Common myeloid progenitor, CD34-positive (primary cell): ENCODE measurements at regions of chr19 and their contacts with region 1.

Region 1: GRCh38 chr19:44770550-44771257 is 7.0 kb upstream of the CBLC start:
- DNase-seq: peak; percentile 98 to 99 (median 99)
- H3K4me3 ChIP-seq: peak overlapping the region in 2 of 7 experiments; percentile 19 to 28
- H3K27ac ChIP-seq: no peak overlapping the region
- H3K4me1 ChIP-seq: peaks cover 3 to 29% (median 18%) of the 10 kb centered on the region in 4 experiments
- H3K27me3 ChIP-seq: no peaks in the 10 kb centered on the region

Region 2: DNA sequence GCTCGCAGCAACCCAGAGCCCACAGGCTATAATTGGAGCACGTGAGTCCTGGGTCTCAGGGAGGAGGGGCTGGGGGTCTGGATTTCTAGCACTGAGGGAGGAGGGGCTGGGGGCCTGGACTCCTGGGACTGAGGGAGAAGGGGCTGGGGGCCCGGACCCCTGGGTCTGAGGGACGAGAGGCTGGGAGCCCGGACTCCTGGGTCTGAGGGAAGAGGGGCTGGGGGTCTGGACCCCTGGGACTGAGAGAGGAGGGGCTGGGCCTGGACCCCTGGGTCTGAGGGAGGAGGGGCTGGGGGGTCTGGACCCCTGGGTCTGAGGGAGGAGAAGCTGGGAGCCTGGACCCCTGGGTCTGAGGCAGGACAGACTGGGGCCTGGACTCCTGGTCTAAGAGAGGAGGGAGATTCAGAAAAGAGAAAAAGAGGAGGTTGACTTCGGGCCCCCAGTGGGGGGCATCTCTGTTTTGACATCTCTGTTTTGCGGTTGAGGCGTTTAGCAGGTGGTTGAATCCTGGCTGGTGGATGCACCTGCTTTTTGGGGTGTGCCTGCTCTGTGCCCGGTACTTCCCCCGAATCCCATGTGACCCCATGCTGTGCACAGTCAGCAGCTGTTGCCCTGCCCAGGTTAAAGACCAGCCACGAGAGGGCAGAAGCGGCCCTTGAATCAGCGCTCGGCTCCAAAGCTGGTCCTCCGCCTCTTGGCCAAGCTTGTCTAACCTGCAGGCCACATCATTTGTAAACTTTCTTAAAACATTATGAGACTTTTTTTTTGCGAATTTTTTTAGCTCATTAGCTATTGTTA is 116.5 kb before region 1 on chr19:
- CTCF ChIA-PET with region 1: interaction called, 14 read pairs
- POLR2A ChIA-PET with region 1: no interaction called
- DNase-seq: peak; percentile 84 to 94 (median 94)
- H3K4me3 ChIP-seq: no peak overlapping the region
- H3K27ac ChIP-seq: no peak overlapping the region
- H3K4me1 ChIP-seq: peaks cover 0 to 5% (median 2%) of the 10 kb centered on the region in 4 experiments
- H3K27me3 ChIP-seq: no peaks in the 10 kb centered on the region

Region 3: DNA sequence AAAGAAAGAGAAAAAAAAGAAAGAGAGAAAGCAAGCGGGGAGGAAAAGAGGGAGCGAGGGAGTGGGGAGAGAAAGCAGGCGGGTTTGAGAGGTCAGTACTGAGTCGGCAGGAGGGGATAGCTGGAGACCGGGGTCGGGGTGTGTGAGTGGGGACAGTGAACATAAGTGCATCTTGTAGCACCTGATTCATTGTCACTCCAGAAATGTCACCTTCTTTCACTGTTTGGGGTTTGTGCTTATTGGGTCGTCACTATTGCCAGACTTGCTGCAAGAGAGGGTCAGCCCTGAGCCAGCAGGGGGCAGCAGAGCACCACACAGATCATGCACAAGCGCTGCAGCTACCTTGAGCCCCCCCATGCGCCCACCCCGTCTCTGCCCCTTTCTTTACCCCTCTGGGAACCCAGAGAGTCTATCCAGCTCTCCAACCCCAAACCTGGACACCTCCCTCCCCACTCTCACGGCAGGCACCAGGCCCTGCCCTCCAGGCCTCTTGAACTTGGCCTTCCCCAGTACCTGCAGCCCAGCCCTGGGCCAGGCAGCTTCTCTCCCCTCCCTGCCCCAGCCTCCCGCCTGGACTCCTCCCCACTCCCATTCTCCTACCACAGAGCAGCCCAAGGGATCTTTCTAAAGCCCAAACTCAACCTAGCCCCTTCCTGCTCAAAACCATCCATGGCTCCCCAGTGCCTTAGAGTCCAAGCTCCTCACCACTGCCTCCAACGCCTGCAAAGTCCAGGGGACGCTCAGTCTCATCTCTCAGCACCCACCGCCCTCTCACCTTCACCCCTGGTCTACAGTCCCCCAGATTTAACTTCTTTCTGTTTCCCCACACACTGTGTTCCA is 81.4 kb before region 1 on chr19:
- CTCF ChIA-PET with region 1: interaction called, 138 read pairs
- POLR2A ChIA-PET with region 1: interaction called, 3 read pairs
- DNase-seq: peak; percentile 82 to 92 (median 88)
- H3K4me3 ChIP-seq: peak overlapping the region in 1 of 7 experiments; percentile 24
- H3K27ac ChIP-seq: no peak overlapping the region
- H3K4me1 ChIP-seq: peaks cover 7 to 46% (median 40%) of the 10 kb centered on the region in 4 experiments
- H3K27me3 ChIP-seq: peaks cover 0 to 6% (median 0%) of the 10 kb centered on the region in 5 experiments

Region 4: DNA sequence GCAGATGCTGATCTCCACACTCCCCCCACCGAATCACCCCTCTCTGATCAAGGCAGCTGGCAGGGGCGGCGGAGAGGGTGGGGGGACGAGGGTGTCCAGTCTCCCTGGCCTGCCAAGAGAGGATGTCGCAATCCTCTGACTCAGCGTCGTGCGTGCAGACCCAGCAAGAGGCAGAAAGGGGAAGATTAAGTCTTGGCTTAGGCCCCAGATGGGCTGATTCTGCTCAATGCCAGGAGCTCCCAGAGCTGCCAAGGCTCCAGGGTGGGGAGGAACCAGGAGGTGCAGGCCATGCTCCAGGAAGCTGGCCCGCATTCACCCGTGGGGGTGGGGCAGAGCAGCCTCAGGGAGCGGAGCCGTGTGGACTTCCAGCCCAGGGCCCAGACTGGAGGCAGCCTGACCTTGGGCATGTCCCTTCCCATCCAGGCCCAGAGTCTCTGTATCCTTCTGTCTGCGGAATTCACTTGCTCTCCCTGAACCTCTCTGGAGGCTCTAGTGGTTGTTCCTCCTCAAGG is 28.8 kb before region 1 on chr19:
- CTCF ChIA-PET with region 1: interaction called, 17 read pairs
- POLR2A ChIA-PET with region 1: no interaction called
- DNase-seq: peak; percentile 95 to 98 (median 98)
- H3K4me3 ChIP-seq: peak overlapping the region in 1 of 7 experiments; percentile 48
- H3K27ac ChIP-seq: peak overlapping the region; percentile 33 to 79
- H3K4me1 ChIP-seq: peaks cover 17 to 84% (median 52%) of the 10 kb centered on the region in 4 experiments
- H3K27me3 ChIP-seq: no peaks in the 10 kb centered on the region

Region 5: GRCh38 chr19:44752816-44753618 is 17.7 kb before region 1 on chr19:
- CTCF ChIA-PET with region 1: interaction called, 26 read pairs
- POLR2A ChIA-PET with region 1: interaction called, 36 read pairs
- DNase-seq: peak; percentile 98 to 100 (median 100)
- H3K4me3 ChIP-seq: peak overlapping the region in 6 of 7 experiments; percentile 25 to 92 (median 59)
- H3K27ac ChIP-seq: peak overlapping the region; percentile 36 to 88
- H3K4me1 ChIP-seq: peaks cover 22 to 82% (median 78%) of the 10 kb centered on the region in 4 experiments
- H3K27me3 ChIP-seq: no peaks in the 10 kb centered on the region

Region 6: GRCh38 chr19:44782729-44783128 is 12.0 kb after region 1 on chr19:
- CTCF ChIA-PET with region 1: interaction called, 19 read pairs
- POLR2A ChIA-PET with region 1: no interaction called
- DNase-seq: no peak
- H3K4me3 ChIP-seq: no peak overlapping the region
- H3K27ac ChIP-seq: no peak overlapping the region
- H3K4me1 ChIP-seq: peaks cover 0 to 14% (median 10%) of the 10 kb centered on the region in 4 experiments
- H3K27me3 ChIP-seq: peaks cover 0 to 2% (median 0%) of the 10 kb centered on the region in 5 experiments